ENCODE measurements at regions of chr12 and their contacts with region 1.

Region 1: DNA sequence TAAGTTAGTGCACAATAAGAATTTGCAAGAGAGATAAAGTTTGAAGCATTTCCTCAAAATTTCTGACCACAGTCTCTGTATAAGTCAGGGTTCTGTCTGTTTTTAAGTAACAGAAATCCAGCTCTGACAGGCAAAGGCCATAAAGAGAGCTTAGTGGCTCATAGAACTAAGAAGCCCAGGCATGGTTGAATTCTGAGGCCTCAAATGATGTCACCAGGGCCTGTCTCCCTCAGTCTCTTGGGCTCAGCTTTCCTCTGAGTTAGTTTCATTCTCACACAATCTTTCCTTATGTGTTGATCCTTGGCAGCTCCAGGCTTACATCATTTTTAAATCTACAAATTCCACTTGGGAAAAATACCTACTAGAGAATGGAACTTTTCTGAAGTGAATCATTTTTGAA is 173.4 kb upstream of the ATP2B1 start:
- DNase-seq: no peak
- H3K4me3 Mint-ChIP-seq: no peak overlapping the region
- H3K27ac Mint-ChIP-seq: no peak overlapping the region
- H3K4me1 Mint-ChIP-seq: peaks cover 23% of the 10 kb centered on the region
- H3K27me3 Mint-ChIP-seq: peaks cover 2% of the 10 kb centered on the region

Region 2: GRCh38 chr12:89470741-89471509 is 411.1 kb before region 1 on chr12:
- intact Hi-C with region 1: loop called (anchors 5 kb)
- DNase-seq: no peak
- H3K4me3 Mint-ChIP-seq: no peak overlapping the region
- H3K27ac Mint-ChIP-seq: peak overlapping the region; percentile 22
- H3K4me1 Mint-ChIP-seq: peaks cover 76% of the 10 kb centered on the region
- H3K27me3 Mint-ChIP-seq: no peaks in the 10 kb centered on the region

Region 3: DNA sequence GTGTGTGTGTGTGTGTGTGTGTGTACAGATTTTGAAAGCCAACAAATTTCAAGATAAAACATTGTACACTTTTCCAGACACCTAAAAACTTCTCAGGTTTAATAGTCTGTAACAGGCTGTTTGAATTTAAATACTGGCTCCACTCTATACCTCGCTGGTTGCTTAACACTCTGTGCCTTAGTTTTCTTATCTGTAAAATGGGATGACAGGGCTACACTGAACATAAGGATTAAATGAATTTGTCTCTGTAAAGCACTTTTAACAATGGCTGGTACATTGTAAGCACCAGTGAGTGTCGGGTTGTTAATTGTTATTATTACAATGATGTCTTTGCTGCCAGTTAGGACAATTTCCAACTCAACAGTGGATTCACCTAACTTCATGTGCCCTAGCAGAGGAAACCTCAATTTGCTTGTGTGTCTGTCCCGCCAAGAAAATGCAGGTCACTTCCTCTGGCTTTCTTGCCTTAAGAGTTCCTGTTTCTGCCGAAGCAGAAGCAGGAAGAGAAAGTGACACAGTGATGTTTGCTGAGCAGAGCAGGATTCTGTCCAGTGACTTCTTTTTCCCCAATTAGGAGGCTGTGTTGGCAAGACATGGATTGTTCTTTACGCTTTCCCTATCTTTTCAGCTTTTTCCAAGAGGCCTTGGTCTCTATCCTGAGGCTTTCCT is 19.4 kb before region 1 on chr12:
- intact Hi-C with region 1: loop called (anchors 1 kb)
- DNase-seq: peak; percentile 44
- H3K4me3 Mint-ChIP-seq: peak overlapping the region; percentile 76
- H3K27ac Mint-ChIP-seq: peak overlapping the region; percentile 95
- H3K4me1 Mint-ChIP-seq: peaks cover 60% of the 10 kb centered on the region
- H3K27me3 Mint-ChIP-seq: no peaks in the 10 kb centered on the region

Region 4: GRCh38 chr12:89935825-89936224 is 53.8 kb after region 1 on chr12:
- intact Hi-C with region 1: loop called (anchors 1 kb)
- DNase-seq: no peak
- H3K4me3 Mint-ChIP-seq: no peak overlapping the region
- H3K27ac Mint-ChIP-seq: no peak overlapping the region
- H3K4me1 Mint-ChIP-seq: peaks cover 17% of the 10 kb centered on the region
- H3K27me3 Mint-ChIP-seq: no peaks in the 10 kb centered on the region

Region 5: DNA sequence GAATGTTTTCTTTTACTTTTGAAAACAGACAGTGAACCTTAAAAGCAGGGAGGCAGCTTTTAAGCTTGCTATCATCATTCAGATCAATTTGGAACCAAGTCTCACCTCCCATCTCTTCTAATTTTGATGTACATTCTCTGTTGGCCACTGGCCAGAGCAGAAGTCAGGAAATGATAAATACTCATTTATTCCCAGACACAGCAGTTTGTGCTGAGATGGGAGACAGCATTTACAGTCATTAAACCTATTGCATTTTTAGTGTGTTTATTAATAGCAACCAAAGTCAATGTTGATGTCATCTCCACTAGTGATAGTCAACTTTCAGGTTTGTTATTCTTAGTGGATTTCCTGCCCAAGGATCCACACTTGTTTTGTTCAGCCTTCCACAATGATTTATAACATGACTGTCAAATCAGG is 146.6 kb after region 1 on chr12:
- intact Hi-C with region 1: no loop called
- DNase-seq: no peak
- H3K4me3 Mint-ChIP-seq: no peak overlapping the region
- H3K27ac Mint-ChIP-seq: no peak overlapping the region
- H3K4me1 Mint-ChIP-seq: peaks cover 10% of the 10 kb centered on the region
- H3K27me3 Mint-ChIP-seq: peaks cover 3% of the 10 kb centered on the region

Region 6: GRCh38 chr12:90042920-90043641 is 161.0 kb after region 1 on chr12:
- intact Hi-C with region 1: loop called (anchors 10 kb)
- DNase-seq: no peak
- H3K4me3 Mint-ChIP-seq: no peak overlapping the region
- H3K27ac Mint-ChIP-seq: no peak overlapping the region
- H3K4me1 Mint-ChIP-seq: peaks cover 17% of the 10 kb centered on the region
- H3K27me3 Mint-ChIP-seq: peaks cover 1% of the 10 kb centered on the region

Region 7: GRCh38 chr12:90102957-90103652 is 221.1 kb after region 1 on chr12:
- intact Hi-C with region 1: loop called (anchors 5 kb)
- DNase-seq: no peak
- H3K4me3 Mint-ChIP-seq: no peak overlapping the region
- H3K27ac Mint-ChIP-seq: no peak overlapping the region
- H3K4me1 Mint-ChIP-seq: peaks cover 6% of the 10 kb centered on the region
- H3K27me3 Mint-ChIP-seq: peaks cover 2% of the 10 kb centered on the region

Measured in activated T-helper 1 cell treated with anti-CD3 and anti-CD28 coated beads, Interleukin-12 subunit alpha, Interleukin-12 subunit beta, Interleukin-2, Interleukin-4 antibody, amounts not matched to agents 30 ng/mL and 10 ng/mL and 1 ng/mL, durations not matched to agents 14 hours and 24 hours and 36 hours (primary cell).